Breast epithelium (tissue), 4 donors: ENCODE measurements at regions of chr1 and their contacts with region 1.

Region 1: DNA sequence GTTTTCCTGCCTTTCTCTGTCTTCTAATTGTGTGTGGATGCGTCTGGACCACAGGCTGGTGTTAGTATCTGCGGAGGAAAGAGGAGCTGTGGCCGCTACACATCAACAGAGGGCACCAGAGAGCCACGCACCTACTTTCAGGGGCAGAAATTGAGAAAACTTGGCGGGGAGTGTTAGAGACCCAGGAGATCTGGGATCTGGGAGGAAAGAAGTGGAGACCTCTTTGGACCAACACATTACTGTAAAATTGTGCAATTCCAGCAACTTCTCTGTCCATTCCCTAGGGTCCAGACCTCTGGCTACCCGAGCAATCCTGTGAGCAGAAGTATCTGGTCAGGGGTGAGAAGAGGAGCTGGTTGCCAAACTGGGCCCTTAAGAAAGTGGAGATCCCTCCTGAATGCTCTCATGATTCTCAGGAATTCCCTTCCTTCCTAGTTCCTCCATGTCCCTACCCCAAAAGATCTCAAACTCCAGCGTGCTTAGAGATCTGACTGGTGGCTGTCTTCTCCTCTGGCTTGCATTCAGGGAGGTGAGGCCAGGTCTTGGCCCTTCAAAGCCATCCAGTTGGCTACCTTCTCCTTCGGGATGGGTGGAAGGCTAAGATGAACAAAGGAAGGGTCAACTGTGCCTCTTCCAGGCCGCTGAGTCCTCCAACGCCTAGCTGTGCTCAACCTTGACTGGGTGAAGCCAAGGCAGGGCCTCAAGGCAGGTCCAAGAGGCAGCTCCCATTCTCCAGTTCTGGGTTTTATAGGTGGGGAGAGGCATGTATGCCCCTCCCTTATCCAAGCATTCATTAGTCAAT is 1.2 kb upstream of the KIRREL1 start:
- DNase-seq: peak in 1 of 2 donors; percentile 63
- H3K4me3 ChIP-seq: no peak overlapping the region
- H3K27ac ChIP-seq: peak overlapping the region; percentile 91 to 98
- H3K4me1 ChIP-seq: no peaks in the 10 kb centered on the region
- H3K27me3 ChIP-seq: no peaks in the 10 kb centered on the region
- CTCF ChIP-seq: peak; percentile 81 to 92 (median 83)
- POLR2A ChIP-seq: no peak

Region 2: GRCh38 chr1:158035976-158036583 is 43.8 kb after region 1 on chr1:
- intact Hi-C with region 1: loop called (anchors 5 kb)
- DNase-seq: no peak
- H3K4me3 ChIP-seq: no peak overlapping the region
- H3K27ac ChIP-seq: peak overlapping the region in 1 of 2 donors; percentile 5
- H3K4me1 ChIP-seq: no peaks in the 10 kb centered on the region
- H3K27me3 ChIP-seq: no peaks in the 10 kb centered on the region
- CTCF ChIP-seq: peak; percentile 52 to 62 (median 56)
- POLR2A ChIP-seq: no peak

Region 3: GRCh38 chr1:158117854-158118704 is 125.8 kb after region 1 on chr1:
- intact Hi-C with region 1: loop called (anchors 10 kb)
- DNase-seq: no peak
- H3K4me3 ChIP-seq: peak overlapping the region in 2 of 3 donors; percentile 23
- H3K27ac ChIP-seq: no peak overlapping the region
- H3K4me1 ChIP-seq: no peaks in the 10 kb centered on the region
- H3K27me3 ChIP-seq: peaks cover 0 to 12% of the 10 kb centered on the region in 2 donors
- CTCF ChIP-seq: peak in 2 of 3 donors; percentile 14 to 29
- POLR2A ChIP-seq: no peak